ENCODE measurements at regions of chr3 and their contacts with region 1.

Region 1: GRCh38 chr3:56702490-56703315 is 19.6 kb upstream of the TASOR start:
- DNase-seq: no peak
- ATAC-seq: peak; percentile 85
- H3K4me3 ChIP-seq: no peak overlapping the region
- H3K27ac ChIP-seq: no peak overlapping the region
- H3K4me1 ChIP-seq: peaks cover 10% of the 10 kb centered on the region; the same call in 1 of the 2 replicates
- H3K27me3 ChIP-seq: no peaks in the 10 kb centered on the region
- CTCF ChIP-seq: peak; percentile 66 to 83 (median 70)
- EP300 ChIP-seq: no peak
- POLR2A ChIP-seq: no peak
- RAD21 ChIP-seq: peak; percentile 99

Region 2: GRCh38 chr3:56753206-56753820 is 50.6 kb after region 1 on chr3:
- CTCF ChIA-PET with region 1: interaction called, 34 read pairs
- POLR2A ChIA-PET with region 1: interaction called, 4 read pairs
- RAD21 ChIA-PET with region 1: interaction called, 5 read pairs
- SMC1A ChIA-PET with region 1: interaction called, 13 read pairs
- in situ Hi-C with region 1: no loop called
- intact Hi-C with region 1: no loop called
- DNase-seq: peak; percentile 87
- ATAC-seq: peak; percentile 96
- H3K4me3 ChIP-seq: peak overlapping the region; percentile 43; the same call in 1 of the 2 replicates
- H3K27ac ChIP-seq: peak overlapping the region; percentile 70
- H3K4me1 ChIP-seq: peaks cover 48% of the 10 kb centered on the region
- H3K27me3 ChIP-seq: no peaks in the 10 kb centered on the region
- CTCF ChIP-seq: no peak; a peak in 1 of 6 replicates
- EP300 ChIP-seq: peak; percentile 68 to 79; a peak in 3 of 4 replicates
- POLR2A ChIP-seq: no peak
- RAD21 ChIP-seq: 0 out of 2 replicates have a peak, but pooled peaks have one; percentile 7

Region 3: GRCh38 chr3:56915966-56916586 is 213.4 kb after region 1 on chr3:
- CTCF ChIA-PET with region 1: interaction called, 3 read pairs
- POLR2A ChIA-PET with region 1: no interaction called
- RAD21 ChIA-PET with region 1: interaction called, 4 read pairs
- SMC1A ChIA-PET with region 1: interaction called, 17 read pairs
- in situ Hi-C with region 1: no loop called
- intact Hi-C with region 1: loop called (anchors 2 kb)
- DNase-seq: peak; percentile 32
- ATAC-seq: peak; percentile 72
- H3K4me3 ChIP-seq: peak overlapping the region; percentile 66
- H3K27ac ChIP-seq: peak overlapping the region; percentile 92
- H3K4me1 ChIP-seq: peaks cover 49% of the 10 kb centered on the region
- H3K27me3 ChIP-seq: no peaks in the 10 kb centered on the region
- CTCF ChIP-seq: no peak
- EP300 ChIP-seq: 0 out of 4 replicates have a peak, but pooled peaks of 1 of the 2 experiments have one; percentile 20
- POLR2A ChIP-seq: peak; percentile 56
- RAD21 ChIP-seq: no peak

Region 4: GRCh38 chr3:56997675-56998074 is 295.0 kb after region 1 on chr3:
- CTCF ChIA-PET with region 1: interaction called, 18 read pairs
- POLR2A ChIA-PET with region 1: interaction called, 3 read pairs
- RAD21 ChIA-PET with region 1: interaction called, 6 read pairs
- SMC1A ChIA-PET with region 1: interaction called, 12 read pairs
- in situ Hi-C with region 1: loop called (anchors 5 kb)
- intact Hi-C with region 1: no loop called
- DNase-seq: no peak
- ATAC-seq: no peak
- H3K4me3 ChIP-seq: no peak overlapping the region
- H3K27ac ChIP-seq: no peak overlapping the region
- H3K4me1 ChIP-seq: no peaks in the 10 kb centered on the region; the same call in 1 of the 2 replicates
- H3K27me3 ChIP-seq: no peaks in the 10 kb centered on the region
- CTCF ChIP-seq: no peak
- EP300 ChIP-seq: no peak
- POLR2A ChIP-seq: no peak
- RAD21 ChIP-seq: no peak